ENCODE measurements at regions of chr11 and their contacts with region 1.

Region 1: GRCh38 chr11:73141848-73142286 is 251 bp downstream of the FCHSD2 start:
- DNase-seq: peak in 8 of 10 donors; percentile 34 to 66 (median 48)
- H3K4me3 ChIP-seq: peak overlapping the region; percentile 64 to 99 (median 92)
- H3K27ac ChIP-seq: peak overlapping the region; percentile 72 to 98 (median 96)
- H3K27me3 ChIP-seq: no peaks in the 10 kb centered on the region
- CTCF ChIP-seq: no peak

Region 2: DNA sequence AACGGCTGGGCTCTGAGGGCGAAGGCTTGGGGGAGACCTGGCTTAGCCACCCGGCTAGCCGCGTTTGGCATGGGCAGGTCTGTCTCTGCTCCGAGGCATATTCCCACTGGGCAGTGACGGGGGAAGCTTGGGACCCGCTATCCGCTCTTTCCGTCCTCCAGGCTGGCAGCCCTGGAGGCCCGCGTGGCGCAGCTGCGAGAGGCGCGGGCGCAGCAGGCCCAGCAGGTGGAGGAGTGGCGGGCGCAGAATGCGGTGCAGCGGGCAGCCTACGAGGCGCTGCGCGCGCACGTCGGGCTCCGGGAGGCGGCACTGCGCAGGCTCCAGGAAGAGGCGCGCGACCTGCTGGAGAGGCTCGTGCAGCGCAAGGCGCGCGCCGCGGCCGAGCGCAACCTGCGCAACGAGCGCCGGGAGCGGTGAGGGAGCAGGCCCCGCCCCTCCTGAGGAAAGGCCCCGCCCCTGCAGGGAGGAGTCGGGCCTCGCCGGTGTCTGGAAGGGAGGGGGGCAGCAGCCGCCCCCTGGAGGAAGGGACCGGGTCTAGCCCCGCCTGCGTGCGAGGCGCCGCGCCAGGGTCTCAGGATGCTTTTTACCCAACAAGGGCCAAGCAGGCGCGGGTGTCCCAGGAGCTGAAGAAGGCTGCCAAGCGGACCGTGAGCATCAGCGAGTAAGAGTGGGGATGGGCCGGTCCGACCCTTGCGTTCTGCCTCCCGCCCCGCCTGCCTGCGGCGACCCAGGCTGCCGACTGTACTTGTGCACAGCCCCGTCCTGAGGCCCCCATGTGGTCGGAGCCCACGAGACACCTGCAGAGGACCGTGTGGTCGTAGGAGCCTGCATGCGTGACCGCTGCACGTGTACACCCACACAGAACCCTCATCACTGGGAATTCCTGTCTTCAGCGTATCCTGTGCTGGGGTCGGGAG is 319.7 kb before region 1 on chr11:
- intact Hi-C with region 1: loop called in 1 of 2 experiments (anchors 5 kb)
- DNase-seq: peak; percentile 68 to 92 (median 89)
- H3K4me3 ChIP-seq: peak overlapping the region; percentile 30 to 79 (median 68)
- H3K27ac ChIP-seq: peak overlapping the region; percentile 20 to 96 (median 86)
- H3K27me3 ChIP-seq: no peaks in the 10 kb centered on the region
- CTCF ChIP-seq: peak in 50 of 56 donors; percentile 21 to 70 (median 50)

Region 3: DNA sequence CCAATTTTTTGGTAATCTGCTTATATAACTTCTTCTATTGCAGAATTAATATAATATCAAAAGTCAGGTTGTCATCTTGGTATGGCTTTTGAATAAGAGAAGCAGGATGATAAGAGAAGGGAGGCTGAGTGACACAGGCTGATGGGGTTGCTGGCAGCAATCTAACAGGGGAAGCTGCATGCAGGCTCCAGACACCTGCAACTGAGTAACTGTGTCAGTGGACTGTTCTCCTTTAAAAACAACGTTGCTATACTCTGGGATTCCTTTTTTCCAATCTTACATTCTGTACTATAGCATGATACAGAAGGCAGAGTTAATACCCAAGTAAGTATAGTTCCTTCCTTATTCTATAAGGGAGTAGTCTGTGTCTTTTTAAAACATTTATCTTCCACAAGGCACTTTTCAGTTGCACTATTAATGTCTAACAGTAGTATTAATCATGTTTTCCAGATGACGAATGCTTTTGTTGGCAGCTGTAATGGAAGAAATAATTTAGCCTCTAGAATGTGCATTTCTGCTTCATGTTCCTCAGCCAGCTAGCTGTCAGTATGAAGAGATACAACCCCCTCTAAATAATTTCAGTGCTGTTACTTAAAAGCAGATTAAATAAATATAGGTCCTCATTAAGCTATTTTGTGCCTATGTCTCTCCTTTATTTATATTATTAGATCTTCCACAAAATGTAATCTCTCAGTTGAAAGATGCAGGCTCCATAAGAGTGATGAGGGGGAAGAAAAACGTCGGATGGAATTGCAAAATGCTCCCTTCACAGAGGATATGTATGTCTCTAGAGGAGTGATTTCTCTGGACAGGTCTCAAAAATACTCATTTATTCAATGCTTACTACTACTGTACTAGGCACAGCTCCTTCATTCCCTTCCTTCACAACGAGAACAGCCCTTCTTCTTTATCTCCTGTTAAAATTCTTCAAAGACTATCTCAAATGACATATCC is 276.9 kb before region 1 on chr11:
- intact Hi-C with region 1: loop called in 1 of 2 experiments (anchors 5 kb)
- DNase-seq: no peak
- H3K4me3 ChIP-seq: no peak overlapping the region
- H3K27ac ChIP-seq: peak overlapping the region in 46 of 59 donors; percentile 1 to 80 (median 50)
- H3K27me3 ChIP-seq: no peaks in the 10 kb centered on the region
- CTCF ChIP-seq: peak in 1 of 56 donors; percentile 9

Region 4: GRCh38 chr11:72924568-72925190 is 217.2 kb before region 1 on chr11:
- intact Hi-C with region 1: loop called (anchors 5 kb)
- DNase-seq: no peak
- H3K4me3 ChIP-seq: no peak overlapping the region
- H3K27ac ChIP-seq: peak overlapping the region in 3 of 59 donors; percentile 3 to 40 (median 6)
- H3K27me3 ChIP-seq: no peaks in the 10 kb centered on the region
- CTCF ChIP-seq: peak in 54 of 56 donors; percentile 31 to 69 (median 52)

Region 5: DNA sequence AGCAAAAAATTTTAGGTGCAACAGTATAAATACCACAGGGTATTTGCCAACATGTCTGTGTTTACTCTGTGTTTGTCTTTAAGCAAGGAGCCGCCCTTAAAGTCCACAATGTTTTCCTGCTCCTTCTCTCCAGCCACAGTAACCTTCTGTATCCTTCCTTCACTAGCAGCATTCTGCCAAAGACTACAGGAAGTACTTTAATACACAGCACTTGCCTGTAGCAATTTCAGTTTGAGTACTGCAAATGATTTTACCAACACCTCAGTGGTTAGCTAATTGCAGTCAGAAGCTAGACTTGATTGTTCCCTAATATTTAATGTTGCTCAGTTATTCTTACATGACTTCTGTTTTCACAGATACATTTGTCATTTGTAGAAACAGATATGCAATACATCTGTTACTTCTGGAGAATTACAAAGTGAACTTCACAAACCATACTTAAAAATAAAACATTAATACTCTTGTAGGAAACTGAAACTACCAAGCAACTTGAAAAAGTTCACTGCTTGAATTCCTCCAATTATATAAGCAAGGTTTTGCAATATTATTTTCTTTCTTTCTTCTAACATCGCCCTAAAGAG is 68.9 kb before region 1 on chr11:
- intact Hi-C with region 1: loop called in 1 of 2 experiments (anchors 10 kb)
- DNase-seq: no peak
- H3K4me3 ChIP-seq: peak overlapping the region in 18 of 59 donors; percentile 1 to 33 (median 15)
- H3K27ac ChIP-seq: peak overlapping the region in 40 of 59 donors; percentile 1 to 72 (median 36)
- H3K27me3 ChIP-seq: no peaks in the 10 kb centered on the region
- CTCF ChIP-seq: no peak